ENCODE measurements at regions of chr1 and their contacts with region 1.

Region 1: GRCh38 chr1:42924082-42924850 is 34.4 kb downstream of the SLC2A1 start:
- DNase-seq: peak; percentile 89 to 94 (median 90)
- H3K4me3 ChIP-seq: peak overlapping the region; percentile 52 to 87 (median 80)
- H3K4me3 Mint-ChIP-seq: peak overlapping the region; percentile 89 to 93
- H3K27ac ChIP-seq: peak overlapping the region; percentile 32 to 92
- H3K27ac Mint-ChIP-seq: peak overlapping the region; percentile 85 to 94 (median 88)
- H3K4me1 ChIP-seq: peaks cover 14 to 26% of the 10 kb centered on the region in 2 donors
- H3K4me1 Mint-ChIP-seq: peaks cover 27% of the 10 kb centered on the region
- H3K27me3 ChIP-seq: no peaks in the 10 kb centered on the region
- H3K27me3 Mint-ChIP-seq: peaks cover 0 to 2% (median 0%) of the 10 kb centered on the region in 3 donors
- CTCF ChIP-seq: no peak

Region 2: GRCh38 chr1:42886800-42887199 is 37.5 kb before region 1 on chr1:
- intact Hi-C with region 1: no loop called
- DNase-seq: no peak
- H3K4me3 ChIP-seq: no peak overlapping the region
- H3K4me3 Mint-ChIP-seq: no peak overlapping the region
- H3K27ac ChIP-seq: no peak overlapping the region
- H3K27ac Mint-ChIP-seq: no peak overlapping the region
- H3K4me1 ChIP-seq: no peaks in the 10 kb centered on the region
- H3K4me1 Mint-ChIP-seq: no peaks in the 10 kb centered on the region
- H3K27me3 ChIP-seq: no peaks in the 10 kb centered on the region
- H3K27me3 Mint-ChIP-seq: peaks cover 3 to 6% (median 6%) of the 10 kb centered on the region in 3 donors
- CTCF ChIP-seq: no peak

Region 3: DNA sequence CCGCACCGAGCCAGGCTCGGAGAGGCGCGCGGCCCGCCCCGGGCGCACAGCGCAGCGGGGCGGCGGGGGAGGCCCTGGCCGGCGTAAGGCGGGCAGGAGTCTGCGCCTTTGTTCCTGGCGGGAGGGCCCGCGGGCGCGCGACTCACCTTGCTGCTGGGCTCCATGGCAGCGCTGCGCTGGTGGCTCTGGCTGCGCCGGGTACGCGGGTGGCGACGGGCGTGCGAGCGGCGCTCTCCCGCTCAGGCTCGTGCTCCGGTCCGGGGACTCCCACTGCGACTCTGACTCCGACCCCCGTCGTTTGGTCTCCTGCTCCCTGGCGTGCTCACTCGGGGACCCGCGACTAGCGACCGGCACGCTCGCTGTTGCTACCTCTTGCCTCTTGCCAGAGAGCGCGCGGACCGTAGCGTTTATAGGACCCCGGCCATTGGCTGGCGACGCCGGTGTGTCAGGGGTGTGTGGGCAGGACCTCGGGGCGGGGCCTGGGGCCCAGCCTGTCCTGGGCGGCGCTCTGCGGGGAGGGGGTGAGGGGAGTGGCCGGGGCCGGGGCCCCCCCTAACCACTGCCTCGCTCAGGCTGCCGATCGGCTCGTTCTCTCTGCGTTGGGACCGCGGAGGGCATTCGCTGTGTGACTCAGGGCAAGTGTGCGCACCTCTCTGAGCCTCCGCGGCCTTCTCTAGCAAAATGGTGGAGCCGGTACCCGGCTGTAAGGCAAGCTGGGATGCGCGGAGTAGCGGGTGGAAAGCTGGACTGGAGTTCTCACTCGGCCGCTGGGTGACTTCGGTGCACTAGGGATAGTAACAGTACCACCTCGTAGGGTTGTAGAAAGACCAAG is 34.4 kb after region 1 on chr1 and contains the start of gene SLC2A1:
- intact Hi-C with region 1: loop called (anchors 5 kb)
- DNase-seq: peak; percentile 75 to 82 (median 77)
- H3K4me3 ChIP-seq: peak within 1 kb of the TSS; percentile 51 to 80 (median 53)
- H3K4me3 Mint-ChIP-seq: peak within 1 kb of the TSS; percentile 96
- H3K27ac ChIP-seq: peak within 1 kb of the TSS in 1 of 2 donors; percentile 41
- H3K27ac Mint-ChIP-seq: peak within 1 kb of the TSS in 4 of 7 donors; percentile 37 to 82 (median 76)
- H3K4me1 ChIP-seq: peaks cover 19 to 33% of the 10 kb centered on the region in 2 donors
- H3K4me1 Mint-ChIP-seq: peaks cover 29% of the 10 kb centered on the region
- H3K27me3 ChIP-seq: peaks cover 21 to 63% of the 10 kb centered on the region in 2 donors
- H3K27me3 Mint-ChIP-seq: peaks cover 62 to 68% (median 65%) of the 10 kb centered on the region in 3 donors
- CTCF ChIP-seq: no peak
- polyA plus RNA-seq, gene SLC2A1: 0.56 to 5.0 (median 0.71) TPM

Region 4: DNA sequence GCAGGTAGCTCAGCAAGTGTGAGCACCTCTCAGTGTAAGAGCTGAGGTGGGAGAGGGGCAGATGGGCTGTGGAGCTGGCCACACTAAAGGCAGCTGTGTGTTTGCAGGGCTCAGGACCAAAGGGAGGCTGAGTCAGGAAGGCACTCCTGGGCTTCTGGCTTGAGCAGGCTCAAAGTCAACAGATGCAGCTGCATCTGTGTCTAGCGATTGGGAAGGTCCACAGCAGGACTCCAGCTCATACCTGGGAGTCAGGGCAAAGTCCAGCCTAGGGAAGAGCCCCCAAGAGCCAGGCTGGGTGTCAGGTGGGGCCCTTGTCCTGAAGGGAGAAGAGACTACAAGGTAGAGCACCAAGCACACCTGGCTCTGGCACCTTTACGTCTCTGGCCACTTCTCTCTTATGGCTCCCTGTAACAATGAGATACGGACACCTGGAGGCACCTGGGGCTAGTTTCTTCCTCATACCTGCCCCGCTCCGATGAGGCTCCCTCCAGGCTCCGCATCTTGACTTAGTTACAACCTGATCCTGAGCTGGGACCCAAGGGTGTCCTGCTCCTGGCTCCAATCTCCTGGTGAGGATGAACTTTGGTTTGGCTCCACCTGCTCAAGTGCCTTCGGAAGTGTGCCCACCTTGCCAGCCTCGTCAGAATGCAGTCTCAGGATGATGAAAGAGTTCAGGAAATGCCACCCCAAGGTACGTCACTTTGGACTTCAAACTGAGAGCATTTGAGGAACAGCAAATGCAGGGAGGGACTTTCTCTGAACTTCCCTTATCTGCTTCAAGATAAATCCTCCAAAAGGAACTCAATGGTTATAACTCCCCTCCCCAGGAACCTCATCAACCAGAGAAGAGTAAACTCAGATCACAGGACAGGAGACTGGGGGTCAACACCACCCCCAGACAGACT is 55.9 kb after region 1 on chr1:
- intact Hi-C with region 1: loop called in 1 of 2 experiments (anchors 10 kb)
- DNase-seq: peak; percentile 68 to 90 (median 71)
- H3K4me3 ChIP-seq: no peak overlapping the region
- H3K4me3 Mint-ChIP-seq: peak overlapping the region in 1 of 2 donors; percentile 56
- H3K27ac ChIP-seq: no peak overlapping the region
- H3K27ac Mint-ChIP-seq: peak overlapping the region; percentile 63 to 88 (median 78)
- H3K4me1 ChIP-seq: peaks cover 11 to 15% of the 10 kb centered on the region in 2 donors
- H3K4me1 Mint-ChIP-seq: peaks cover 18% of the 10 kb centered on the region
- H3K27me3 ChIP-seq: no peaks in the 10 kb centered on the region
- H3K27me3 Mint-ChIP-seq: peaks cover 0 to 3% (median under 1%) of the 10 kb centered on the region in 3 donors
- CTCF ChIP-seq: no peak

Region 5: DNA sequence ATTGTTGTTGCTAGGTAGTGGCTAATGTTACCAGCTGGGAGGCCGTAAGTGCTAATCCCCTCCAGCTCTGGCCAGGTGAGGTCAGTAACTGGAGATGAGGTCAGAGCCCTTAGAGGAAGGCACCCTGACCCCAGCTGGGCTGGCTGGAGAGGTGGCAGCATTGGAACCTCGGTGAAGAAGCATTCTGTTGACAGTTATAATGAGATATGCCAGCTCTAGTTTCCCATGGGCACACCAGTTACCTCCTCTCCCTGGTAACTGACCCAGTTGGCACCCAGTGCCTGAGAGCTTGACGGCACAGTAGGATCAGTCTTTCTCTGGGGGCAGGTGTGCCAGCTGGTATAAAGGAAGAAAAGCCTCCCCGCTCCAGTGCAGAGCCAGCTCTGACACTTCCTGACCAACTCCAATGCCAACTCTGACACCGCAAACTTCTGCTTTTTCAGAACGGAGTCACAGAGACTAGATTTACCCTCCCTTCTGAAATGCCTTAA is 69.4 kb after region 1 on chr1:
- intact Hi-C with region 1: loop called (anchors 10 kb)
- DNase-seq: peak; percentile 60 to 64 (median 60)
- H3K4me3 ChIP-seq: no peak overlapping the region
- H3K4me3 Mint-ChIP-seq: peak overlapping the region in 1 of 2 donors; percentile 49
- H3K27ac ChIP-seq: no peak overlapping the region
- H3K27ac Mint-ChIP-seq: peak overlapping the region in 4 of 7 donors; percentile 2 to 67 (median 36)
- H3K4me1 ChIP-seq: peaks cover 9 to 11% of the 10 kb centered on the region in 2 donors
- H3K4me1 Mint-ChIP-seq: peaks cover 11% of the 10 kb centered on the region
- H3K27me3 ChIP-seq: no peaks in the 10 kb centered on the region
- H3K27me3 Mint-ChIP-seq: peaks cover 0 to 2% (median 0%) of the 10 kb centered on the region in 3 donors
- CTCF ChIP-seq: no peak

Region 6: GRCh38 chr1:43048601-43049011 is 124.3 kb after region 1 on chr1:
- intact Hi-C with region 1: no loop called
- DNase-seq: no peak
- H3K4me3 ChIP-seq: no peak overlapping the region
- H3K4me3 Mint-ChIP-seq: no peak overlapping the region
- H3K27ac ChIP-seq: no peak overlapping the region
- H3K27ac Mint-ChIP-seq: no peak overlapping the region
- H3K4me1 ChIP-seq: no peaks in the 10 kb centered on the region
- H3K4me1 Mint-ChIP-seq: no peaks in the 10 kb centered on the region
- H3K27me3 ChIP-seq: no peaks in the 10 kb centered on the region
- H3K27me3 Mint-ChIP-seq: peaks cover 4 to 6% (median 5%) of the 10 kb centered on the region in 3 donors
- CTCF ChIP-seq: no peak

Region 7: DNA sequence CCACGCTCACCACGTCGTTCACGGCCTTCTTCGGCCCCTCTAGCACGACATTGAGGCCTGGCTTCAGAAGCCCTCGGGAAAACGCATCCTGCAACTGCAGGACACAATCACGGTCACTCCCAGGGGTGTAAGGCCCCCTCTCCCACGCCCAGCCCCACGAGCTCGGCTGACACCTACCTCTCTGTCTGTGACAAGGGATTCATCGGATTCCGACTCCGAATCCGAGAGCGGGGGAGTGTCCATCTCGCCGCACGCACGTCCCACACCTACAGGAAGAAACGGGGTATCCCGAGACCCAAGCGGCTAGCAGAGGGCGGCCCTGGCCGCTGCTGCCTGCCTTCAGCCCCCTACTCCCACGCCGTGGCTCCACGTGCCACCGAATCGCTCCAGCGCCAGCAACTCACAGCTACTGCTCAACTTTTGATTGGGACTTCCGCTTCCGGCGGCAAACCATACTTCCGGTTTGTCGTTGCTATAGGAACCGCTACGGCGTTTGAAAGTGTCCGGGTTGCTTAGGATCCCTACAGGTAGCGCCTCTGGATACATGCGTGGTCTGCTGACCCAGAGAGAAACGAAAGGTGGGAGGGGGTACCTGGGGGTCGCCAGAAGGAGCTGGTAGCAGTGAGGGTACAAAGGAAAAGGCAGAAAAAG is 247.7 kb after region 1 on chr1 and contains the starts of genes CFAP57 and EBNA1BP2:
- intact Hi-C with region 1: loop called in 1 of 2 experiments (anchors 10 kb)
- DNase-seq: peak; percentile 95
- H3K4me3 ChIP-seq: peak within 1 kb of the TSS; percentile 62 to 98 (median 80)
- H3K4me3 Mint-ChIP-seq: peak within 1 kb of the TSS; percentile 94 to 96
- H3K27ac ChIP-seq: peak within 1 kb of the TSS in 1 of 2 donors; percentile 71
- H3K27ac Mint-ChIP-seq: peak within 1 kb of the TSS; percentile 71 to 97 (median 95)
- H3K4me1 ChIP-seq: peaks cover 9 to 16% of the 10 kb centered on the region in 2 donors
- H3K4me1 Mint-ChIP-seq: peaks cover 17% of the 10 kb centered on the region
- H3K27me3 ChIP-seq: peaks cover 0 to 23% of the 10 kb centered on the region in 2 donors
- H3K27me3 Mint-ChIP-seq: peaks cover 5 to 17% (median 13%) of the 10 kb centered on the region in 3 donors
- CTCF ChIP-seq: no peak
- polyA plus RNA-seq, gene CFAP57: 0.01 to 0.05 TPM in 2 of 3 donors, not detected in the other
- polyA plus RNA-seq, gene EBNA1BP2: 10.2 to 37.2 (median 30.9) TPM